Left cardiac atrium (tissue), 4 donors: ENCODE measurements at regions of chr4 and their contacts with region 1.

Region 1: DNA sequence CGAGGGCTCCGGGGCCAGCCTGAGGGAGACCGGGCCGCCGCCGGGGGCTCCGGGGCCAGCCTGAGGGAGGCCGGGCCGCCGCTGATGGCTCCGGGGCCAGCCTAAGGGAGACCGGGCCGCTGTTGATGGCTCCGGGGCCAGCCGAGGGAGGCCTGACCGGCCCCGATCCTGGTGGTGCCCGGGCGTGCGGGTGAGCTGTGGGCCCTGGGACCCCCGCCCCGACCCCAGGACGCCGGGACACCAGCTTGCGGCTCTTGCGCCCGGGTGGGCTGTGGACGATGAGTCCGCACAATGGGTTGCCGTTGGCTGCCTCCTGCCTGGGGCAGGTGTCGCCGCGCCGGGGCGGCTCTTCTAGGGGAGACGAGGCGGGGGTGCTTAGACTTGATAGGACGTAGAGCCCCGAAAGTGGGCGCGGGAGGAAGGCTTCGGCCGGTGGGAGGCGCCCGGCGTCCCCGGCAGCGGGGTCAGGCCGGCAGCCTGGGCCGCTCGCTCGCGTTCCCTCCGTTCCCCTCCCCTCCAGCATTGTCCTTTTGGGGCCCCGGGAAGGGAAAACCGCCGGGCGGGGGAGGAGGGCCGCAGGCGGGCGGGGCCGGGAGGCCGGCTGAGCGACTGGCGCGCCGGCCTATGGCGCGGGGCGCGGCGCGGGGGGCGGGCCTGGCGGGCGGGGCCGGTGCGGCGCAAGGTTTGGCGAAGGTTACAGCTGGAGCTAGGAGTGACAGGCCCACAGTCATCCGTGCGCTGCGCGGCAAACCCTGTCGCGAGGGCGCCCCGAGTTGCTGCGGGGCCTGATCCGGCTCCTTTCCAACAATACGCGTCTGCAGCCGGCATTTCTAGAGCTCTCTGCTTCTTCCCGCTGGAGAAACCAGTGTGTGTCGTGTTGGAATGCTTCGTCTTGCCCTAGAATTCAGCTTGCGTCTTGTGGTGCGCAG is 790 bp downstream of the KIAA0232 start:
- DNase-seq: peak; percentile 92
- ATAC-seq: peak; percentile 89 to 92

Region 2: DNA sequence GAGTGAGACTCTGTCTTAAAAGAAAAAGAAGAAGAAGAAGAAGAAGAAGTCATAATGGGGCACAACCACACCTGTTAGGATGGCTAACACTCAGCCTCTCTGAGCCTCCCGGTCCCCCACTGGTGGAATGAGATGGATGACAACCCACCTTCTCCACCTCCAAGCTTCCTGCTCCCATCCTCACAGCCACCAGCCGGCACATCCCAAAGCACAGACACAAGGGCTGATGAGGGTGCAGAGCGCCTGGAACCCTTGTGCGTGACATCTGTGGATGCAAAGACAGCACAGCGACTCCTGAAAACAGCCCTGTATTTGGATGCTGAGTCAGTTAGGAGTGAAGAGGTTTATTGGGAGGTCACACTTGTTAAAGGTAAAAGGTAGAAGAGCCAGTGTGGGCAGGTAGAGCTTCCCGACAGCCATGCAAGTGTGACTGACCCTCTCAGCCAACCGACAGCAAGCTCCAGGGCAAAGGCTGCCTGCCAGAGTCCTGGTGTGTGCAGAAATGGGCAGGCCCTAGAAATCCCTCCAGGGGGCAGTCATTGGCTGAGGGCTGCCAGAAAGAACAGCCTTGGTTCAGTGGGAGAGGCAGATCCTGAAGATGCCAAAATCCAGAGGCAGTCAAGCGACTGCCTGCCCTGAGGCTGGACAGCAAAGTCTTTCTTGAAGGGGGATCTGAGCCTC is 235.0 kb before region 1 on chr4:
- intact Hi-C with region 1: no loop called
- DNase-seq: peak; percentile 35
- ATAC-seq: peak in 1 of 2 donors; percentile 55

Region 3: DNA sequence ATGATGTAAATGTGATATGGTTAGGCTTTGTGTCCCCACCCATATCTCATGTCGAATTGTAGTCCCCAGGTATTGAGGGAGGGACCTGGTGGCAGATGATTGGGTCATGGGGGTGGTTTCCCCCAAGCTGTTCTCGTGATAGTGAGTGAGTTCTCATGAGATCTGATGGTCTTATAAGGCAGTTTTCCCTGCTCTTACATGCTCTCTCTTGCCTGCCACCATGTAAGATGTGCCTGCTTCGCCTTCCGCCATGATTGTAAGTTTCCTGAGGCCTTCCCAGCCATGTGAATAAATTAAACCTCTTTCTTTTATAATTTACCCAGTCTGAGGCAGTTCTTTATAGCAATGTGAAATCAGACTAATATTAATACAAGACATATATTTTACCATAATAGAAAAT is 43.4 kb before region 1 on chr4:
- intact Hi-C with region 1: loop called in 1 of 2 experiments (anchors 5 kb)
- DNase-seq: no peak
- ATAC-seq: no peak

Region 4: DNA sequence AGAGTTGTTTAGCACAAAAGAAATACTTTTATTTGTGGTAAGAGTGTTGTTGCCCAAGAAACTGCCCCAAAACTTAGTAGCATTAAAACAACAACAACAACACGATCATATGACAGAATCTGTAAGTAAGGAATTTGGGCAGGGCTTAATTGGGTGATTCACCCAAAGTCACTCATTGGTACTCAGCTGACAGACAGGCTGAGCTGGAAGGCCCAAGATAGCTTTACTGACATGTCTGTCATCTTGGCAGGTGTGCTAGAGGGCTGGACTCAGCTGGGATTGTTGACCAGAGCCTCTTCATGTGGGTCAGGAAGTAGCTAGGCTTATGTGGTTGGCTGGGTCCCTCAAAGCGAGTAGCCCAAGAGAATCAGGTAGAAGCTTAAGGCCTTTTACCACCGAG is 51.5 kb after region 1 on chr4:
- intact Hi-C with region 1: no loop called
- DNase-seq: no peak
- ATAC-seq: peak in 1 of 2 donors; percentile 82

Region 5: GRCh38 chr4:6855692-6856297 is 72.5 kb after region 1 on chr4:
- intact Hi-C with region 1: loop called in 1 of 2 experiments (anchors 5 kb)
- DNase-seq: no peak
- ATAC-seq: peak; percentile 72 to 80

Region 6: DNA sequence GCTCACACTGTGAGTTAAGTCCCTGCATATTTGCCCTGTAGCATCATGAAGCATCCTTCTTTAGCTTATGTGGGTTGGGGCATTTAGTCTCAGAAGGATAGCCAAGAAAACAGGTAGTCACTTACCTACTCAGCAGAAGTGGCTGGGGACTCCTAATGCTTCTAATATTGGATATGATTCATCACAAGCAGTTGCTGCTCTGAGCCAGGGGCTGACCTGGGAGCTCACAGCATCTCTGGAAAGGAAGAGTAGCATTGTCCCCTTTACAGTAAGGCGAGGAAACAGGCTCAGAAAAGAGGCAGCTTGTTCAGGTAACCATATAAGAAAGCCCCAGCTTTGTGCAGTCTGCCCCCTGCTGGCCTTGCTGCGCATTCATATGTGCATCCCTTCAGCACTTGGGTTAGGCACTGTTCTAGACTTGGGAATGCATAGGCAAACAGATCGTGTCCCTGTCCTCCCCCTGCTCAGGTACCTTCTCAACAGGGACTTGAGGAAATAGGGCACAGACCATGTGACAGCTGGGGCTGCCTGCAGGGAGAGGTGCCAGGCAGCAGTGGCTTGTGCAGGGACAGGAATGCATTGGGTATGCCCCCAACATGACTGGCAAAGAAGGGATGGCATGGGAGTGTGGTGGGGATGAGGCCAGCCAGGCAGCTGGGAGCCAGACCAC is 90.6 kb after region 1 on chr4:
- intact Hi-C with region 1: loop called in 1 of 2 experiments (anchors 10 kb)
- DNase-seq: peak; percentile 75
- ATAC-seq: peak; percentile 76 to 77